PC-9 (cell line): ENCODE measurements at regions of chr7 and their contacts with region 1.

Region 1: GRCh38 chr7:41045556-41046123 is 657.2 kb downstream of the INHBA start:
- DNase-seq: peak; percentile 73 to 80
- H3K4me3 ChIP-seq: no peak overlapping the region
- H3K27ac ChIP-seq: no peak overlapping the region
- H3K4me1 ChIP-seq: peaks cover 19% of the 10 kb centered on the region
- H3K27me3 ChIP-seq: no peaks in the 10 kb centered on the region
- CTCF ChIP-seq: peak; percentile 70

Region 2: DNA sequence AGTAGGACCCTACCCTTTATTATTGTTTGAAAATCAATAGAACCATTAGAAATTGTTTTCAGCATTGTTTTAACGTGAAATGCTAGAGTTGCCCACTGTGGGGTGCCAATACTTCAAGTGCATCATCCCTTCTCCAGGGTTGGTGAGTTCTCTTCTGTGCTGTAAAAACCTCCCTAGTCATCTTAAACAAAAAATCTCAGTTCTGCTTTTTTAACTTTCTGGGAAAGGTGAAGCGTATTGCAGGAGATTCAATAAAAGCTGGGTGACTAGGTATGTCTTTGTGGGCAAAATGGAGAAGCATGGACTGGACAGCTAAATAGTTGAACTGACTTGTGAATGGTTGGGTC is 211.8 kb before region 1 on chr7:
- CTCF ChIA-PET with region 1: no interaction called
- POLR2A ChIA-PET with region 1: no interaction called
- intact Hi-C with region 1: loop called (anchors 5 kb)
- DNase-seq: no peak
- H3K4me3 ChIP-seq: no peak overlapping the region
- H3K27ac ChIP-seq: no peak overlapping the region
- H3K4me1 ChIP-seq: no peaks in the 10 kb centered on the region
- H3K27me3 ChIP-seq: no peaks in the 10 kb centered on the region
- CTCF ChIP-seq: peak; percentile 60

Region 3: DNA sequence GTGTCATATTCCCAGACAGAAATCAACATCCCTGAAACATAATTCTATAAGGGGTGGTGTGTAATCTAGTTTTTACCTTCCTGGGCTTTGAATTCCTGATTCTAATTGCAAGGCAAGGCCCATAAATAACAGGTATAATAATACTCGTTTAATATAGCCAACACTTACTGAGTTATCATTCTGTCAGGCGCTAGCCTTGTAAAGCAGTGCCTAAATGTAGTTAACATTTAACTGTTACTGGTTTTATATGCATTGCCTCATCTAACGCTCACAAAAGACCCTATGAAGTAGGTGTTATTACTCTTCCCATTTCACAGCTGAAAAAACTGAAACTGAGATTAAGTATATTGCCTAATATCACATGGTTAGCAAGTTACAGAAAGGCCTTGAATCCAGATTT is 138.4 kb before region 1 on chr7:
- CTCF ChIA-PET with region 1: no interaction called
- POLR2A ChIA-PET with region 1: no interaction called
- intact Hi-C with region 1: no loop called
- DNase-seq: no peak
- H3K4me3 ChIP-seq: no peak overlapping the region
- H3K27ac ChIP-seq: no peak overlapping the region
- H3K4me1 ChIP-seq: no peaks in the 10 kb centered on the region
- H3K27me3 ChIP-seq: no peaks in the 10 kb centered on the region
- CTCF ChIP-seq: no peak

Region 4: DNA sequence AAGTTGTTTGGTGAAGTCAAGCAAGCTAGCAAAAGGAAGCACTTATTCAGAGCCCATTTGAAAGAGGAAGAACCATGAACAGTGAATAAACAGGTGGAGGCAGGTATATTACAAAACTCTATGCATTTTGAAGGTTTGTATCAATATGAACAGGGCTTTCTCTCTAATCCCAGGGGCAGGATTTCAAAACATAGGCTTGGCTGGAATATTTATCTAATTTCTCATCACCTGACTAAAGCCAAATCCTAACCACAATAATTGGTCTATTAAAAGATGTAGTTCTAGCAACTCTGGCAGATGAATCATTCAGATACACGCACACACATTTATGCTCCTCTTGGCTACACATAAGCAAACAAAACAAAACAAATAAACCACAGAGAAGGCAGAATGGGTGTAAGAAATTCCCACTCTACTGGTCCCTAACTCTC is 102.9 kb after region 1 on chr7:
- CTCF ChIA-PET with region 1: no interaction called
- POLR2A ChIA-PET with region 1: no interaction called
- intact Hi-C with region 1: loop called (anchors 1 kb)
- DNase-seq: peak; percentile 34 to 100
- H3K4me3 ChIP-seq: no peak overlapping the region; the same call in 1 of the 2 replicates
- H3K27ac ChIP-seq: peak overlapping the region; percentile 66
- H3K4me1 ChIP-seq: peaks cover 26% of the 10 kb centered on the region
- H3K27me3 ChIP-seq: no peaks in the 10 kb centered on the region
- CTCF ChIP-seq: no peak

Region 5: GRCh38 chr7:41247143-41247865 is 201.7 kb after region 1 on chr7:
- CTCF ChIA-PET with region 1: no interaction called
- POLR2A ChIA-PET with region 1: no interaction called
- intact Hi-C with region 1: loop called (anchors 1 kb)
- DNase-seq: peak; percentile 60 to 99
- H3K4me3 ChIP-seq: no peak overlapping the region
- H3K27ac ChIP-seq: peak overlapping the region; percentile 70
- H3K4me1 ChIP-seq: peaks cover 32% of the 10 kb centered on the region
- H3K27me3 ChIP-seq: no peaks in the 10 kb centered on the region
- CTCF ChIP-seq: no peak

Region 6: DNA sequence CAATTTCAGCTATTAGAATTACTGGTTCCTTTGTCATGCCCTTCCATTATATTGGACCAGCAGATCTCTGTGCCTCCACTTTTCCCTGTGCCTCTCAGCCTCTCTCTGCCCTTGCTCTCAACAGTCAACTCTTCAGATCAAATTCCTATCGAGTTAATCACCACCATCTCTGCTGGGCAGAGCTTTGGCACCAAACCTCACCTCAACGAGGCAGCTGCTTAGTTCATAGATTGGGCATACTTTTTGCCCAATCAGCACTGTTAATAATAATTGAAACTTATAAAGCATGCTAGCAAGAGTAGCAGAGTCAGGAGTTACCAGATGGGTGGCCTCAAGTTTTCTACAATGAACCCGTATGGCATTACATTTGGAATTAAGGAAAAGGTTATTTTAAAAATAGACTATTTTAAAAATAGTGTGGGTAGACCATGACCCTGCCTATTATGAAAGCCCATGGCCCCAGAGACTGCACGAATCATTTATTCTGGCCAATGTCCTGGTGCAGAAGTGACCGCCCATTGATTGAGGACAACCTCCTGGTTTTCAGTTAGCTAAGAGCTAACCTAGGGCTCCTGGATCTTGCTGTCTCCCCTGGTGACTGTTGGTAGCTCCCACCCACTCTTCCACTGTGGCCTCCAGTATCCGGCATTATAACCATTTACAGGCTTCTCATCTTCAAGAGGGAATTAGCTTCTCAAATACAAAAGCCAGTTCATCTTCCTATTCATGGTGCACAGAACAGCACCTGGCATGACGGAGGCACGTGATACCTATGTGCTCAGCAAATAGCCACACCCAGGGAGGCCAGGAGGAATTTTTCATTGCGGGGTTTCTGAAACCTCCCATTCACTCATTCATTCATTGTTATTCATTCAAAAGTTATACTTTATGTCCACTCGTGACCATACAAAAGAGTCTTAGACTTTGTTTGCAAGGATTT is 391.9 kb after region 1 on chr7:
- CTCF ChIA-PET with region 1: no interaction called
- POLR2A ChIA-PET with region 1: no interaction called
- intact Hi-C with region 1: loop called (anchors 10 kb)
- DNase-seq: peak; percentile 33 to 48
- H3K4me3 ChIP-seq: no peak overlapping the region
- H3K27ac ChIP-seq: no peak overlapping the region
- H3K4me1 ChIP-seq: 0 out of 2 replicates have a peak, but pooled peaks cover 4% of the 10 kb centered on the region
- H3K27me3 ChIP-seq: no peaks in the 10 kb centered on the region
- CTCF ChIP-seq: no peak

Region 7: DNA sequence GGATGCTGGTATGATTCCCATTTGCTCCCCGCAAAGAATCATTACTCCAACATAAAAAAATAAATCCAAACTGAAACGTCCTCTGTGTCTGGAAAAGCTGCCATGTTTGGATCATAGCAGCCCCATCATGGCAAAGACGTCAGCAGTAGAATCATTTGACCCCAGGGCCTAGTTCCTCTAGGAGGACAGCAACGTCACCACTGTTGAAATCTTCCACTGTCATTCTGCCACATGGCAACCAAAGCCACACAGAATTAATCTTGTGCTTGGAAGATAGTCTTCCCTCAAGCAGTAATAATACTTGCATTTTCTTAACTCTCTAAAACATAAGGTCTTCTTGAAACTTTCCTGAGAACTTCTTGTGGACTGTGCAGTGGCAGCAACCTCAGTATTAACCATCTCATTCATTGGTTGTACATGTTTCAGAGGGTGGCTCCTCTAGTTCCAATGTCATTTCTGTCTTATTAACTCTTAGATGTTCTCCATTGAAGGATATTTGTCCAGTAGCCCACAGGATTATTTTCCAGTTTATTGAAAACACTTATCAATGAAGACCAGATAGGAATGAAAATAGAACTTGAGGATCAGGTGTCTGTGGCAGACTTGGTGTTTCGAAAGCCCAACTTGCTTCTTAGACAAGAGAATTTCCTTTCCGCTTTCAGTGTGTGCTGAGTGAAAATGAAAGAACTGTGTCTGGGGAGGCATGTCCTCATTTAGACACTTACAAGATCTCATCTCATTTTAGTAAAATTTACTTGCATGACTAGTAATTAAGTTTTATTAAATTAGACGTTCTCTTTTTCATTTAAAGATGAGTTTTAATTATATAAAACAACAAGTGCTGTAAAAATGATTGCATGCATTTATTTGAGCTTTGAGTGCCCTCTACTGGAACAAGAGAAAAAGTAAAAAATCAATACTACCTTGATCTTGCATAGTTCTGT is 686.1 kb after region 1 on chr7:
- CTCF ChIA-PET with region 1: no interaction called
- POLR2A ChIA-PET with region 1: no interaction called
- intact Hi-C with region 1: loop called (anchors 1 kb)
- DNase-seq: no peak
- H3K4me3 ChIP-seq: no peak overlapping the region
- H3K27ac ChIP-seq: no peak overlapping the region
- H3K4me1 ChIP-seq: no peaks in the 10 kb centered on the region
- H3K27me3 ChIP-seq: no peaks in the 10 kb centered on the region
- CTCF ChIP-seq: peak; percentile 93